ENCODE measurements at regions of chr2 and their contacts with region 1.

Region 1: DNA sequence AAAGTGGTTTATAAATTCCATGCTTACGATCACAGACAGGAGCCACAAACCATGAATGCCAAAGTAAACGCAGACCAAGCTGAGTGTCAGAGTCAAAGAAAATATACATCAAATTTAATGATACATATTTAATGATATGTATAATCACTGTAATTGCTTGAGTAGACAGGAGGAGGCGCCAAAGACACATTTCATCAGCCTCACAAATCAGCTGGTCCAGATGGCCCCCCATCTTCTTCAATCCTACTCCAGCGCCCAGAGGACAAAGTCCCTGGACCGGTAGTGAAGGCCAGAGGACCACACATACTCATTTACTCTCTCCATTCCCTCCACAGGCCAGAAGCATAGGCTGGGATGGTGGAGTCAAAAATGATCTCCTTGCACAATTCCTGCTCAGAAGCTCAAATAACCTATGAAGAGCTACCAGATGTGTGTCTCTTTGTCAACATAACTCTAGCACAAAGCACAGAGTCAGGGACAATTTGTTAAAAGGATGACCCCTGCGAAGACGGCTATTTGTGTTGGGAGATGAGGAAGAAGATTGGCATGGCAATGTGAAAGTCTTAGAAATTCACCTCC is 149.3 kb upstream of the PGAP1 start:
- DNase-seq: peak in 3 of 14 experiments; percentile 26 to 43 (median 37)
- ATAC-seq: no peak
- H3K4me3 ChIP-seq: no peak overlapping the region
- H3K4me3 Mint-ChIP-seq: no peak overlapping the region
- H3K27ac ChIP-seq: no peak overlapping the region
- H3K27ac Mint-ChIP-seq: peak overlapping the region; percentile 63
- H3K4me1 ChIP-seq: peaks cover 17% of the 10 kb centered on the region
- H3K4me1 Mint-ChIP-seq: peaks cover 59% of the 10 kb centered on the region
- H3K27me3 ChIP-seq: no peaks in the 10 kb centered on the region
- H3K27me3 Mint-ChIP-seq: no peaks in the 10 kb centered on the region
- CTCF ChIP-seq: peak; percentile 42

Region 2: DNA sequence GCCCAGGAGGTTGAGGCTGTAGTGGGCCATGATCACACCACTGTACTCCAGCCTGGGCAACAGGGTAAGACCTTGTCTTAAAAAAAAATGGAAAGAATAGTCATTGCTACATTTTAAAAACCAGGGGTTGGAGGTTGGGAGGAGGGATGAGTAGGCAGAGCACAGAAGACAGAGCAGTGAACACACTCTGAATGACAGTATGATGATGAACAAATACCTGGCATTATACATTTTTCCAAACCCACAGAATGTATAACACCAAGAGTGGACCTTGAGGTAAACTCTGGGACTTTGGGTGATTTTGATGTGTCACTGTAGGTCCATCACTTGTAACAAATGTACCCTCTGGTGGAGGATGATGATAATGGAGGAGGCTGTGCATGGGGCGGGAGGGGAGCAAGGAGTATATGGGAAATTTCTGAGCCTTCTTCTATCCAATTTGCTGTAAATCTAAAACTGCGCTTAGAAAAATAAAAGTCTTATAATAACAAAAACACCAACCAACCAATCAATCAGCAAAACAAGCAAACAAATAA is 37.9 kb before region 1 on chr2:
- CTCF ChIA-PET with region 1: no interaction called
- POLR2A ChIA-PET with region 1: no interaction called
- intact Hi-C with region 1: loop called in 1 of 2 experiments (anchors 5 kb)
- DNase-seq: no peak
- ATAC-seq: no peak
- H3K4me3 ChIP-seq: no peak overlapping the region
- H3K4me3 Mint-ChIP-seq: no peak overlapping the region
- H3K27ac ChIP-seq: no peak overlapping the region
- H3K27ac Mint-ChIP-seq: peak overlapping the region; percentile 47
- H3K4me1 ChIP-seq: peaks cover 4% of the 10 kb centered on the region
- H3K4me1 Mint-ChIP-seq: peaks cover 59% of the 10 kb centered on the region
- H3K27me3 ChIP-seq: no peaks in the 10 kb centered on the region
- H3K27me3 Mint-ChIP-seq: no peaks in the 10 kb centered on the region
- CTCF ChIP-seq: no peak